ENCODE measurements at regions of chr1 and their contacts with region 1.

Region 1: GRCh38 chr1:230917284-230918135 is 49.2 kb upstream of the C1orf198 start:
- DNase-seq: peak; percentile 68 to 84 (median 79)
- ATAC-seq: peak; percentile 80 to 84
- H3K4me3 ChIP-seq: no peak overlapping the region
- H3K27ac ChIP-seq: no peak overlapping the region
- H3K4me1 ChIP-seq: no peaks in the 10 kb centered on the region
- H3K27me3 ChIP-seq: no peaks in the 10 kb centered on the region

Region 2: GRCh38 chr1:230797942-230798418 is 119.5 kb before region 1 on chr1:
- intact Hi-C with region 1: loop called (anchors 2 to 5 kb)
- DNase-seq: peak; percentile 59 to 76 (median 71)
- ATAC-seq: peak; percentile 86 to 88
- H3K4me3 ChIP-seq: no peak overlapping the region
- H3K27ac ChIP-seq: no peak overlapping the region
- H3K4me1 ChIP-seq: no peaks in the 10 kb centered on the region
- H3K27me3 ChIP-seq: no peaks in the 10 kb centered on the region

Measured in right cardiac atrium (tissue), 5 donors.